MCF 10A (cell line): ENCODE measurements at regions of chr6 and their contacts with region 1.

Region 1: DNA sequence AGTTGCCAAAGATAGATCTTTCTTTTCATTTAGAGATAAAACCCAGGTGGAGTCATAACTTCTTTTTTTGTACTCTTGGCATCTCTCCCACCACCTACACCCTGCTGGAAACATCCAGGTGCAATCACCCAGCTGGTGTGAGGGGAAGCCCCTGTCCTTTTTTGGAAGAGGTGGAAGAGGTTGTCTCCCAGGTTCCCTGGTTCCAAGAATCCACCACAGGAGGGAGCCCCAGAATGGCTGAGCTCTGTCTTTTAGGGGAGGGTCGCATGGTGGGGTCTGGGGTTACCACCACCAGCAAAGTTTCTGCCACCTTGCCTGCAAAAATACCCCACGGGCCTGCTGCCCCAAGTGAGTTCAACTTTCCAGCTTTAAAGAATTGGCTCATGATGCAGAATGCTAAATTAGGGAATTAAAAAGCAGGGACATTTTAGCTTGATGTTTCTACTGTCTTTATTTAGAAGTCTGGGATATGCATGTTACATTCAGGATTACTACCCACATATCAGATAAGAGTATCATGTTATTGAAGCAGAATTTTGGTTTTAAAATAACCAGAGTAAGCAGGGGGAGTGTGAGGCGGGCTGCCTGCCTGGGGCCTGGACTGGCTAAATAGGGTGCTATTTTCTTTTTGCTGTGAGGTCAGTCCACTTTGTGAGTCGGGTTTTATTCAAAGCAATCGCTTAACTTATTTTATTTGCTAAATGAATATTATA is 11.0 kb downstream of the SMOC2 start:
- DNase-seq: peak; percentile 5
- H3K4me3 Mint-ChIP-seq: no peak overlapping the region
- H3K27ac Mint-ChIP-seq: no peak overlapping the region
- H3K4me1 Mint-ChIP-seq: peaks cover 13% of the 10 kb centered on the region
- H3K27me3 Mint-ChIP-seq: peaks cover 76% of the 10 kb centered on the region
- CTCF ChIP-seq: peak; percentile 27

Region 2: DNA sequence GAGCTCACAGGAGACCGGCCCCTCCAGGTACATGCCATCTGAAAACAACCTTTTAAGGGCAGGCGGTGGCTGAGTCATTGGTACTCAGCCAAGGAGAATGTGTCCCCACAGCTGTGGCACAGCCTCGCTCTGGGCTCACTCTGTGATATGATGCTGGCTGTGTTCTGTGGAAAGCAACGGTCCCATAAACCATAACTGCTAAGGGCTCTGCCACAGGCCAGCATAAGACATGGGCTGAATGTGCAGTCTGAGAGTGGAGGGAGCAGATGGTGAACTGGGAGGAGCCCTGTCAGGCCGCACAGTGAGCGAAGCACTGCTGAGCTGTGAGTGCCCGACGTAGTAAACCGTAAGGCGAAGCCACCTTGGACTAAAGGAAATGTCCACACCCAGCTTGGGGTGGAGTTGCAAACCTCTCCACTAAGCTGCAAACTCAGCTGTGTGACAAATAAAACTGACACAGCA is 425.9 kb after region 1 on chr6:
- CTCF ChIA-PET with region 1: no interaction called
- POLR2A ChIA-PET with region 1: no interaction called
- intact Hi-C with region 1: loop called (anchors 10 kb)
- DNase-seq: peak; percentile 29
- H3K4me3 Mint-ChIP-seq: no peak overlapping the region
- H3K27ac Mint-ChIP-seq: no peak overlapping the region
- H3K4me1 Mint-ChIP-seq: no peaks in the 10 kb centered on the region
- H3K27me3 Mint-ChIP-seq: peaks cover 90% of the 10 kb centered on the region
- CTCF ChIP-seq: no peak